ENCODE measurements at regions of chr1 and their contacts with region 1.

Region 1: DNA sequence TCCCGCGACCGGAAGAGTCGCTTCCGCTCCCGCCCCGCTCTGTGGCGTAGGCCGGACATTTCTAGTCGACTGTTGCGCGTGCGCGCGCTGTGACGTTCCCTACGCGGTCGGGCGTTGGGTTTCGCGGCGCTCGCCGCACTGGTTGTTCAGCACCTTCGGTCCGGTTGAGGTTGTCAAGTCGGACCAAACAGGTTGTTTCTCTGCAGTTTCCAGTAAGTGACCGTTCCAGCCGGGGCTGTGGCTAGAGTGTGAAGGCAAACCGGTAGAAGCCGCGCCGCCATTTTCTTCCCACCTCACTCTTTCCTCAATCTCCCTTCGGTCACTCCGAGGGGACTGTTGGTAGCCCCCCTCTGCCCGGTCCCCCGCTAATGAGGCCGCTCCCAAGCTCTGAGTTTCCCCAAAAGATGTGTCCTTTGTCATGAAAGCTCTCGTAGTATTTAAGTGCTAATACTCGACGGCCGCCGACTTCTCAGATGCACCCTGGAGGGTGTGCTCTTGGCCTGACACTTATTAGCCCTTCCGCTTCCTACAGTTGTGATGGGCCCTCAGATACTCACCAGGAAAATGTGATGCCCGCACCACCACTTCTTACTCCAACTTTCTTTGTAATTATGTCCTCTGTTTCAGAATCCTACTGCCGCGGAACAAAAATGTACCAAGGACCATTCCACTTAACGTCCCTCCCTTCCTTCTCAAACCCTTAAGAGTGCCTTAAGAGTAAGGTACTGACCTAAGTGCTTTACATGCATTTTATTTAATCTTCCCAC is 56.3 kb downstream of the TRAF5 start:
- DNase-seq: peak; percentile 98
- H3K4me3 ChIP-seq: peak overlapping the region; percentile 44 to 78 (median 47)
- H3K27ac ChIP-seq: peak overlapping the region; percentile 94 to 98 (median 96)
- H3K4me1 ChIP-seq: peaks cover 6 to 27% (median 19%) of the 10 kb centered on the region in 6 donors
- H3K27me3 ChIP-seq: no peaks in the 10 kb centered on the region
- CTCF ChIP-seq: no peak
- POLR2A ChIP-seq: peak in 2 of 3 donors; percentile 79 to 87

Region 2: GRCh38 chr1:211335522-211336157 is 47.3 kb before region 1 on chr1:
- intact Hi-C with region 1: loop called (anchors 10 kb)
- DNase-seq: peak; percentile 87
- H3K4me3 ChIP-seq: peak overlapping the region in 4 of 8 donors; percentile 2 to 43 (median 4)
- H3K27ac ChIP-seq: peak overlapping the region; percentile 51 to 96 (median 79)
- H3K4me1 ChIP-seq: peaks cover 42 to 100% (median 97%) of the 10 kb centered on the region in 6 donors
- H3K27me3 ChIP-seq: no peaks in the 10 kb centered on the region
- CTCF ChIP-seq: no peak
- POLR2A ChIP-seq: no peak

Region 3: DNA sequence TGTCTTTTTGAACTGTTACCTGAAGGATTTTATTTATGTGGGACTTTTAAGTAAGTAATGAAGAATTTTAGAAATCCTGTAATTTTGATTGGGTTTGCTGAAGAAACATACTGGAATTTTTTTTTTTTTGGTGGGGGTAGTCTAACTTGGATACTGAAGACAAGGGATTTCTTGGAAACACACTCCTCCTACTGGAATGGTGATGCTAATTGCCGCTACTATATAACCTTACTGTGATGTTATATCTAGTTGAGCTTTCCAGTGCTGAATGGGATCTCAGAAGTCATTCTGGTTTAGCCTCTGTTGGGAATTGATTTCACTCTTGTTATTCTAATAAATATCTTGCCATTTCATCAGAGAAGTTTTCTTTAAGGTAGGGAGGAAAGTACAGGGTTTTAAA is 910.7 kb after region 1 on chr1:
- intact Hi-C with region 1: no loop called
- DNase-seq: no peak
- H3K4me3 ChIP-seq: no peak overlapping the region
- H3K27ac ChIP-seq: peak overlapping the region in 1 of 8 donors; percentile 100
- H3K4me1 ChIP-seq: peaks cover 46 to 89% (median 84%) of the 10 kb centered on the region in 6 donors
- H3K27me3 ChIP-seq: no peaks in the 10 kb centered on the region
- CTCF ChIP-seq: peak in 2 of 11 experiments; percentile 8 to 20
- POLR2A ChIP-seq: no peak

Measured in spleen (tissue), 13 donors.